Cardiac septum (tissue), 1 donor: ENCODE measurements at regions of chr6 and their contacts with region 1.

Region 1: GRCh38 chr6:129498950-129499842 is 210.8 kb downstream of the ARHGAP18 start:
- DNase-seq: no peak

Region 2: GRCh38 chr6:129331450-129332138 is 167.6 kb before region 1 on chr6:
- intact Hi-C with region 1: no loop called
- DNase-seq: no peak

Region 3: GRCh38 chr6:129575378-129576118 is 76.4 kb after region 1 on chr6:
- intact Hi-C with region 1: loop called (anchors 2 kb)
- DNase-seq: no peak

Region 4: DNA sequence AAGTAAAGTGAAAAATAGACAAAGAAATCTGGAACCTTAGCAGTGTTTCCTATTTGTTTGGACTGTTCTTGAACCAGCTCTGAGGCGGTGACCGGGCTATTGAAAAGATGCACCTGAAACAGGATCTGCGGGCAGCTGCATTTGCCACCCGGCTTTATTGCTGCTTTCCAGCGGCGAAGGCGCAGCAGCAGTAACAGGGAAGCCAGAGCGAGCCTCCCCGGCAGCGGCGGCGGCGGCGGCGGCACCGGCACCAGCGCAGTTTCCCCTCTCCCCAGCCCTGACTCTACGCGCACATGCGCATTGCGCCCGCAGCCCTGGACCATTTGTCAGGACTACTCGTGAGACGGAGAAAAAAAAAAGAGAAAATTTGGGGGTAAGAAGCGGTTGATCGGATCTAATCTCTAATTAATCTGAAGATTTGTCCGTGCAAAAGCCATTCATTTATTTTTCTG is 519.1 kb after region 1 on chr6 and contains the start of gene L3MBTL3:
- intact Hi-C with region 1: loop called (anchors 10 kb)
- DNase-seq: peak; percentile 93
- total RNA-seq, gene L3MBTL3: 2.8 TPM